Mammary epithelial cell (primary cell): ENCODE measurements at regions of chr14 and their contacts with region 1.

Region 1: GRCh38 chr14:22314181-22314820 is 274.7 kb downstream of the DAD1 start:
- DNase-seq: peak; percentile 51
- H3K4me3 ChIP-seq: no peak overlapping the region
- H3K27ac ChIP-seq: no peak overlapping the region
- H3K4me1 ChIP-seq: peaks cover 7% of the 10 kb centered on the region
- H3K27me3 ChIP-seq: no peaks in the 10 kb centered on the region
- CTCF ChIP-seq: peak; percentile 67 to 71

Region 2: DNA sequence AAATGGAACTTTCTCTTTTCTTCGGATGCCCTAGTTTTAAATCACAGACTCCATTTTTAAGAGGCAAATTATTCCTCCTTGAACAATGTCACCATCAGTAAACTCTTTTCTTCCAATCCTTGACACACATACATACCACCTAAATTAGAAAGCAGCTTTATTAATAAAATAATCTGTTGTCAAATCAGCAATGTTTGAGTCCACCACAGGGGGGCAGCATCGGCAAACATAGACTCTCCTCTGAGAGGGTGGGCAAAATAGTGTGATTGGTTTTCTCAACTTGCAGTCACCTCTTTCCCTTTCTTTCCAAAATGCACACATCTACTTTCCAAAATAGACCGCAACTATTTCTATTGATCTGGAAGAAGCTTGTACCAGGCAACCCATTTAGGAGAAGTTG is 202.3 kb before region 1 on chr14:
- CTCF ChIA-PET with region 1: no interaction called
- dilution Hi-C with region 1: no loop called
- in situ Hi-C with region 1: no loop called
- intact Hi-C with region 1: no loop called
- DNase-seq: no peak
- H3K4me3 ChIP-seq: no peak overlapping the region
- H3K27ac ChIP-seq: no peak overlapping the region
- H3K4me1 ChIP-seq: peaks cover 3% of the 10 kb centered on the region
- H3K27me3 ChIP-seq: no peaks in the 10 kb centered on the region
- CTCF ChIP-seq: peak; percentile 69 to 86

Region 3: DNA sequence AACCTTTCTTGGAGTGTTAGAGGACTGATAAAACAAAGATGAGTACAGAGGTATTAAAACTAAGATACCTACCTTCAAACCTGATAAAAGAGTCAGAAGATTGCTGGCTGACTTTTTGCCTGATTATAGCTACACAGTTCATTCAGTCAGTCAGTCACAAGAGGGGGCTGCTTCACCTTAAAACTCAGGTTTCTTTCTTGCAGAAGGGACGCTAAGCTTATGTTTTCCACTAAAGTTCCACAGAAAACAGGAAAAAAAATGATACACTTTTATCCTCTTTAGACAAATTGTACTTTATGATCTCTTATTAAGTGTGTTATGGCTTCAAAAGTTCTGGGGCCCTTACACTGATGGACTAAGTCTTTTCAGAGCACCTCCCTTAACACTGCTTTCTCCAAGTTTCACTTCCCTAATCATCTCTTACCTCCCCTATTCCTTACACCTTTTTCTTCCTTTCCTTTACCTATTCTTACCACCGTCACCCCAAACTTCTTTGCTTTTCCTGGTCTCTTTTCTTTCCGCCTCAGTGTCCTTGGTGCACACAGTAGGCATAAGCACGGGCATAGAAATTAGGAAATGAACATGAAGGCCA is 192.0 kb before region 1 on chr14:
- CTCF ChIA-PET with region 1: no interaction called
- dilution Hi-C with region 1: no loop called
- in situ Hi-C with region 1: no loop called
- intact Hi-C with region 1: loop called (anchors 5 kb)
- DNase-seq: peak; percentile 24
- H3K4me3 ChIP-seq: no peak overlapping the region
- H3K27ac ChIP-seq: no peak overlapping the region
- H3K4me1 ChIP-seq: peaks cover 6% of the 10 kb centered on the region
- H3K27me3 ChIP-seq: peaks cover 2% of the 10 kb centered on the region
- CTCF ChIP-seq: peak; percentile 29 to 53

Region 4: DNA sequence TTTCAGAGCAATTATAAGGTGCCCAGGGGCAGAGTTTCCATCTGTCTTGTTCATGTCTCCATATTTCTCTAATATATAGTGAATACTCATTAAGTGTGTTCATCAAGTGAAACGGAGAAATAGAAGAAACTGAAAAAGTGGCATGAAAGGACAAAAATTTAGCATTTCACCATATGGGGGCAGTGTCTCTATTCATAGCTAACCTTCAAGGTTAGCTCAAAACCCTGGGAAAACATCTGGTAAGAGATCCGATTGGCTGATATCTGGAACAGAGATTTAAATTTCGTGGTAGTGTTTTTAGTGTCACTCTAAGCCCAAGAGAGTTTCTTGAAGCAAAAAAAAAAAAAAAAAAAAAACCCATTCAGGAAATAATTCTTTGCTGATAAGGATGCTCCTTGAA is 92.8 kb before region 1 on chr14:
- CTCF ChIA-PET with region 1: interaction called, 3 read pairs
- dilution Hi-C with region 1: no loop called
- in situ Hi-C with region 1: no loop called
- intact Hi-C with region 1: loop called (anchors 1 kb)
- DNase-seq: peak; percentile 13
- H3K4me3 ChIP-seq: no peak overlapping the region
- H3K27ac ChIP-seq: no peak overlapping the region
- H3K4me1 ChIP-seq: peaks cover 9% of the 10 kb centered on the region
- H3K27me3 ChIP-seq: no peaks in the 10 kb centered on the region
- CTCF ChIP-seq: peak; percentile 34 to 49

Region 5: DNA sequence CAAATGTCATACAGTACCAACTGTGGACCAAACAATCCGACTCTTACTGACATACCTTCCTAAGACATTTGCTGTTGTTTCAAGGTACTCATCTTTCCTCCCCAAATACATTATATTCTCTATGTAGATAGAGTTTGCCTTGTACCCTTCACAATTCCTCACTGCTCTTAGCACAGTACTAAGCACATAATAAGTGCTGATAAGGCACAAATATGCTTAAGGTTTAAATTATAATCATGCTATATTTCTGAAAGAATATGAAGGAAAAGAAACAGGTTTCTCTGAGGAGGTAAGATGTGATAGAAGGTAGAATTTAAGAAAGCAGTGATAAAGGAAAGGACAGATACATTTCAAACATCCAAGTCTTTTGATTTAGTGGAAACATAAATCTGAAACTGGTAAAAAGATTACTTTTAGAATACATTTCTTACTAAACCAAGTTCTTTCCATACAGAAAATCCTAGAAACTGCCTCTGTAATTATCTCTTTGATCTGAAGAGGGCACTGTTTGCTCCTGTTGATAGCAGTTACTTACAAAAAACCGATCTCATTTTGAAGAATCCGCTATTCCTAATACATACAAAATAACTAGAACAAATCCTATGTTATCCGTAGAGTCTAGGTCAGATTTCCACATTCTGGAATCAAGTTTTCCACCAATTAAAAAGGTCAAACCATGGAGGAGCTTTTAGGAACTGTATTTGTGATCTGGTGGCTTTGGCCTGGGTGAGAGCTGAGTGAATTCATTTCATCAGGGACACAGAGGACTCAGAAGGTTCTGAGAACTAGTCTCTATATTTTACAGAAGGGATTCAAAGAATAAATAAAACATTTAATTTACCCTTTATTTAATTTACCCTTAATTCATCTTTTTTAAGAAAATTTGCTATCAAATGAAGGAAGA is 37.1 kb before region 1 on chr14:
- CTCF ChIA-PET with region 1: no interaction called
- dilution Hi-C with region 1: loop called (anchors 5 kb)
- in situ Hi-C with region 1: no loop called
- intact Hi-C with region 1: loop called (anchors 1 kb)
- DNase-seq: no peak
- H3K4me3 ChIP-seq: no peak overlapping the region
- H3K27ac ChIP-seq: no peak overlapping the region
- H3K4me1 ChIP-seq: no peaks in the 10 kb centered on the region
- H3K27me3 ChIP-seq: no peaks in the 10 kb centered on the region
- CTCF ChIP-seq: peak; percentile 63 to 78

Region 6: GRCh38 chr14:22472935-22473854 is 158.9 kb after region 1 on chr14:
- CTCF ChIA-PET with region 1: no interaction called
- dilution Hi-C with region 1: no loop called
- in situ Hi-C with region 1: loop called in 1 of 2 experiments (anchors 10 kb)
- intact Hi-C with region 1: loop called (anchors 2 kb)
- DNase-seq: peak; percentile 39
- H3K4me3 ChIP-seq: no peak overlapping the region
- H3K27ac ChIP-seq: no peak overlapping the region
- H3K4me1 ChIP-seq: no peaks in the 10 kb centered on the region
- H3K27me3 ChIP-seq: peaks cover 5% of the 10 kb centered on the region
- CTCF ChIP-seq: peak; percentile 52 to 65